ENCODE measurements at regions of chr11 and their contacts with region 1.

Region 1: DNA sequence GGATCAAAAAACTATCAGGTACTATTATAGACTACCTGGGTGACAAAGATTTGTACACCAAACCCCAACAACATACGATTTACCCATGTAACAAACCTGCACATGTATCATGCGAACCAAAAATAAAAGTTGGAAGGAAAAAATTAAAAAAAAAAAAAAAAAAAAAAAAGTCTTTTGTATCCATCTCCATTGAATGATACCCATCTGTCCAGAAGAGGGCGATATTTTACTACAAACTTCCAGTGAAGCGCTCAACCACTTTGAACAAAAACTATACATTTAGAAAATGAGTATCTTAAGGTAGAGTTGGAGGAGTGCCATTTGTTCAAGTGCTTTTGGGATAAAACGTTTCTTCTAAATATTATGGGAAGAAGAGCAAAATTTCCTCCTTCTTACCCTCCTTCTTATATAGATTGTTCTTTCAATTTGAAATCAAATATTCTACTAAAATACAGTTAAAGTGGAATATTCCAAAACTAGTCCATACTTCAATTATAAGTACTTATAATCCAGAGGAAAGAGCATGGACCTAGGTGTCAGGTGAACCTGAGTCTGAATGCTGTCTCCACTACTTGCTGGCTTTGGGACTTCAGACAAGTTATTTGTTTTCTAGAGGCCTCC is 23.3 kb downstream of the ARL14EP start:
- DNase-seq: no peak
- ATAC-seq: no peak
- H3K4me3 ChIP-seq: no peak overlapping the region
- H3K27ac ChIP-seq: no peak overlapping the region
- H3K4me1 ChIP-seq: peaks cover 18% of the 10 kb centered on the region
- H3K27me3 ChIP-seq: no peaks in the 10 kb centered on the region
- CTCF ChIP-seq: peak; percentile 45 to 52 (median 49); a peak in 5 of 6 replicates
- EP300 ChIP-seq: no peak
- POLR2A ChIP-seq: no peak
- RAD21 ChIP-seq: peak; percentile 80

Region 2: DNA sequence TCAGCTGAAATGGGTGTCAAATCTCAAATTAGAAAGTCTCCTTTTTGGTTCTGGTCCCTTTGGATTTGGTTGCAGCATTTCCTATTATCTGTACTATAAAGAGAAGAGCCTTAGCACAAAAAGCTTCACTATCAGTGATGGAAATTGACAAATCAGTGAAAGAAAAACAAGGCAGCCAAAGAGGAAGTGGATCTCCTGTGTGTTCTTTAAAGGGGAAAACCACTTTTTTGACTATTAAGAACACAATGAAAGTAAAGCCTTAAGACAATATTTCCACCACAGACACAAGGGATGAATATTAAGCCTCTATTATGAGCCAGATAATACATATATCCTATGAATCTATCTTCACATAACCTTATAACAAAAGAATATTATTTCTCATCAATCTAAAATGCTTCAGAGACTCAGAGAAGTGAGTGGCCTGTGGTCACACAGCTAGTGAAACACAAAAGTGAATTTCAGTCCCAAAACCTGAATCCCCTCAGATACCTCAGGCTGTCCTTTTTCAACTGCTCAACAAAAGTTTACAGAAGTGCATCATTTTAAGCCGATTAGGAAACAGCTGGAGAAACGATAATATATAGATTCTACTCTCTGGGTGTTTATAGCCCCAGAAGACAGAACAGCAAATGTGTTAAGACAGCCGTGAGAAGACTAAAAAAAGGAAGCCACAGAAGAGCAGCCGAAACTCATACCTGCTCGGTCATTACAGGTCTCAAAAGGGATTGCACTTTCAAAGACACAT is 139.8 kb before region 1 on chr11:
- CTCF ChIA-PET with region 1: interaction called, 5 read pairs
- POLR2A ChIA-PET with region 1: no interaction called
- RAD21 ChIA-PET with region 1: interaction called, 3 read pairs
- SMC1A ChIA-PET with region 1: interaction called, 4 read pairs
- in situ Hi-C with region 1: no loop called
- intact Hi-C with region 1: loop called (anchors 2 kb)
- DNase-seq: peak; percentile 49
- ATAC-seq: peak; percentile 93
- H3K4me3 ChIP-seq: peak overlapping the region; percentile 6; the same call in 1 of the 2 replicates
- H3K27ac ChIP-seq: peak overlapping the region; percentile 45
- H3K4me1 ChIP-seq: peaks cover 11% of the 10 kb centered on the region; the same call in 1 of the 2 replicates
- H3K27me3 ChIP-seq: no peaks in the 10 kb centered on the region
- CTCF ChIP-seq: no peak
- EP300 ChIP-seq: no peak
- POLR2A ChIP-seq: no peak
- RAD21 ChIP-seq: peak; percentile 7; the same call in 1 of the 2 replicates

Region 3: DNA sequence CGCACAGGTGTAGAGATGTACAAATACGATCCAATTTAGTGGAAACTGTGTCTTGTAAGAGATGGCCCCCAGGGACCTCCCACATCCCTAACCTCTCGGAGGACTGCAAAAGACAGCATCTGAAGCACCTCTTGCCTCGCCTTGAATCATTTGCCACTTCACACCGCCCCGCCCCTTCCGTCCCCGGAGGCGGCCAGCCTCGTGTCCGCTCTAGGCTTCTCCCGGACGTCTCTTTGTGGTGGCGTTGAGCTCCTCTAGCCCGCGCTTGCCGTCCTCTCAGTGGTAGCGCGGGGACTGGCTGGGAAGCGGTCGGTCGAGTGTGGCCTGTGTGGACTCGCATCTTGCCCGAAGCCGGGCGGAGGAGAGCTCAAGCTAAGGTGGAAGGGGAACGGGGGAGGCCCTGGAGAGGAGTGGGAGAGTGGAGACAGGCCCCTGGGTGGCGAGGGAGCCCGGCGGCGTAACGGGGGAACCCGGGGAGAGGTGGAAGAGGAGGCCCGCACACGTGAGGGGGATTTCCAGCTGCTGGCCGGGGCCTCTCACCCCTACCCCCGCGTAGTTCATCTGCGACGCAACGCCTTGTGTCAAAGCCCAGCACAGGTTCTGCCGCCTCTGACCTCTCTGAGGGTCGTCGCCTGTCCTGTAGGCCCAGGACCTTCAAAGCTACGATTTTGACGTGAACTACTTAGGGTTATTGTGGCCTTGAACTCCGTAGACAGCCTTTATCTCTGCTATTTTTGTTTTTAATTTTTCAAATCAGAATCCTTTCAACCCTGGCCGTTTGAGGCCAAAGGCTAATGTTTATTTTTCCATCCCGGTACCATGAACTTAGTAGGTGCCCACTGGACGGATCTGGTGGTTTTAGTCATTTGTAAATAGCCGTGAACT is 23.1 kb before region 1 on chr11 and contains the start of gene ARL14EP:
- CTCF ChIA-PET with region 1: interaction called, 20 read pairs
- POLR2A ChIA-PET with region 1: interaction called, 42 read pairs
- RAD21 ChIA-PET with region 1: interaction called, 38 read pairs
- SMC1A ChIA-PET with region 1: interaction called, 51 read pairs
- in situ Hi-C with region 1: no loop called
- intact Hi-C with region 1: loop called (anchors 2 kb)
- DNase-seq: peak; percentile 82
- ATAC-seq: peak; percentile 91
- H3K4me3 ChIP-seq: peak within 1 kb of the TSS; percentile 100
- H3K27ac ChIP-seq: peak within 1 kb of the TSS; percentile 92
- H3K4me1 ChIP-seq: peaks cover 2% of the 10 kb centered on the region; the same call in 1 of the 2 replicates
- H3K27me3 ChIP-seq: no peaks in the 10 kb centered on the region
- CTCF ChIP-seq: no peak
- EP300 ChIP-seq: peak in 1 of 2 experiments; percentile 20; a peak in 1 of 4 replicates
- POLR2A ChIP-seq: peak; percentile 99
- RAD21 ChIP-seq: 0 out of 2 replicates have a peak, but pooled peaks have one; percentile 1
- polyA plus RNA-seq, gene ARL14EP: 41.3 to 56.7 TPM

Region 4: DNA sequence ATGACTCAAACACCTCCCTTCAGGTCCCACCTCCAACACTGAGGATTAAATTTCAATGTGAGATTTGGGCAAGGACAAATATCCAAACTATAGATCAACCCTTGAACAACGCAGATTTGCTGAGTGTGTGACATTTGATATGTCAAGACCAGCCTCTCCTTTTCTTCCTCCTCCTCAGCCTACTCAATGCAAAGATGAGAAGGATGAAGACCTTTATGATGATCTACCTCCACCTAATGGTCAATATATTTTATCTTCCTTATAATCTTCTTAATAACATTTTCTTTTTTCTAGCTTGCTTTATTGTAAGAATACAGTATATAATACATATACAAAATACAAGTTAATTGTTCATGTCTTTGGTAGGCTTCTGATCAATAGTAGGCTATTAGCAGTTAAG is 307.4 kb after region 1 on chr11:
- CTCF ChIA-PET with region 1: interaction called, 5 read pairs
- POLR2A ChIA-PET with region 1: no interaction called
- RAD21 ChIA-PET with region 1: no interaction called
- SMC1A ChIA-PET with region 1: no interaction called
- in situ Hi-C with region 1: no loop called
- intact Hi-C with region 1: loop called (anchors 10 kb)
- DNase-seq: no peak
- ATAC-seq: no peak
- H3K4me3 ChIP-seq: no peak overlapping the region
- H3K27ac ChIP-seq: no peak overlapping the region
- H3K4me1 ChIP-seq: no peaks in the 10 kb centered on the region
- H3K27me3 ChIP-seq: no peaks in the 10 kb centered on the region
- CTCF ChIP-seq: no peak; a peak in 1 of 6 replicates
- EP300 ChIP-seq: no peak
- POLR2A ChIP-seq: no peak
- RAD21 ChIP-seq: no peak

Region 5: GRCh38 chr11:30917859-30918478 is 571.8 kb after region 1 on chr11:
- CTCF ChIA-PET with region 1: interaction called, 13 read pairs
- POLR2A ChIA-PET with region 1: interaction called, 5 read pairs
- RAD21 ChIA-PET with region 1: interaction called, 5 read pairs
- SMC1A ChIA-PET with region 1: interaction called, 31 read pairs
- in situ Hi-C with region 1: loop called (anchors 5 kb)
- intact Hi-C with region 1: loop called (anchors 1 kb)
- DNase-seq: no peak
- ATAC-seq: peak; percentile 85
- H3K4me3 ChIP-seq: no peak overlapping the region
- H3K27ac ChIP-seq: no peak overlapping the region
- H3K4me1 ChIP-seq: no peaks in the 10 kb centered on the region
- H3K27me3 ChIP-seq: no peaks in the 10 kb centered on the region
- CTCF ChIP-seq: peak; percentile 44 to 66 (median 59); a peak in 5 of 6 replicates
- EP300 ChIP-seq: no peak
- POLR2A ChIP-seq: no peak
- RAD21 ChIP-seq: peak; percentile 66